Mammary epithelial cell (primary cell): ENCODE measurements at regions of chr6 and their contacts with region 1.

Region 1: DNA sequence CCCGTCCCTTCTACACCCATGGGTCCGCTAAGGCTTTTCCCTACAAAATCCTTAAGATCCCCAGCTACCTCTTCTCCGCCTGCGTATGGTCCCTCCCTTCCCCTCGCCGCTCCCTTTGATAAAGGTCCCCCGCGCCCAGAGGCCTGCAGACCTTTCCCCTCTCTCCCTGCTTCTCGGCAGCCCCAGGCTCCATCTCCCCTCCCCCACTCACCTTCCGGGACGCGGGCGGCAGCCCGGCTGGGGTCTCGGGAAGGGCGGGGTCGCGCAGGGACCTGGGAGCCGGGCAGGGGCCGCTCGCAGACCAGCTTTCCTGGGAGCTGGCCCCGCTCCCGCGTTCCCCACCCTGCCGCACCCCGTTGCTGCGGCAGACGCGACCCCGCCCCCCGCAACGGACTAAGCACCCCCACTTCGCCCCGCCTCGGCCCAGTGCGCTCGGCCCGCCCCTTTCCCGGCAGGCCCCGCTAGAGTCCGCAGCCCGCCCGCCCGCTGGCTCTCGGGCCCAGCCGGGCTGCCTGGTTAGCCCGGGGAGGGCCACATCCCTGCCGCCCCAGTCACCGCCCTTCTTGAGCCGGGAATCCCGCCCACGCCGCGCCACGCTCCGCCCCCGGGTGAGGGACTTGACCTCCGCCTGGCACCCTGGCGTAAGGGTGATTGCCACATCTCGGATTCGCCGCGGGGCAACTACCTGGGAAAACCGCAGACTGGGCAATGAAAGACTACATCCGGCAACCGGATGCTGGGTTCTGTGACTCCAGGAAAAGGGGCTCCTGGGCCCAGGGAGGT is at the start of gene FLOT1:
- DNase-seq: peak; percentile 99
- H3K4me3 ChIP-seq: peak within 1 kb of the TSS; percentile 69 to 93 (median 76)
- H3K27ac ChIP-seq: peak within 1 kb of the TSS; percentile 91
- H3K4me1 ChIP-seq: peaks cover 21% of the 10 kb centered on the region
- H3K27me3 ChIP-seq: no peaks in the 10 kb centered on the region
- CTCF ChIP-seq: no peak
- total RNA-seq, gene FLOT1: 53.9 to 57.5 TPM

Region 2: DNA sequence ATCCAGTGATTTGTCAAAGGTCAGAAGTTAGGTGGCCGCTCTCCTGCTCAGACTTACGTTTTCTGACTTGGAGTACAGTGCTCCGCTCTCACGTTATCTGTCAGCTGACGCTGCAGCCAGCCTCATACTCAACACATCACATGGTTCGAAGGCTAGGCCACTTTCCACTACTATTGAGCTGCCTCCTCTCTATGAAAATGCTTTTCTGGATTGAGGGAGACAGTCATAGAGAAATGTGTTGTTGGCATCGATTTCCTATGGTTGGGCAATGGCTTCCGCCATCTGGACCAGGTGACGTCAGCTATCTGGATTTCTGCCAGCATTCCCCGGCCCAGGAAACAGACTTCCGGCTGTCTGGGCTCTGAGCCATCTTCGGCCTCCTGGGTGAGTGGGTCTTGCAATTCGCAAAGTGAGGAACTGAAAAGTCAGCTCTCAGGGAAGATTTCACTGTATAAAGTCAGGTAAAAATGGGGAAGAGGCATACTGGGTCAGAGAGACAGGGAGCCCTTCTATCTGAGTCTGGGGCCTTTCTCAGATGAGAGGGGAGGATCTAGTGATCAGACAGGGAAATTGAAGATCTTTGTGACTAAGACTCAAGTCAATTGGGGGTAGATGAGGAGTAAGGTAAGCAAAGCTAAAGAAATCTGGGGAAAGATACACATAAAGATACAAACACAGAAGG is 39.4 kb after region 1 on chr6:
- CTCF ChIA-PET with region 1: interaction called, 6 read pairs
- dilution Hi-C with region 1: loop called (anchors 5 kb)
- in situ Hi-C with region 1: no loop called
- intact Hi-C with region 1: loop called (anchors 1 kb)
- DNase-seq: peak; percentile 97
- H3K4me3 ChIP-seq: no peak overlapping the region
- H3K27ac ChIP-seq: peak overlapping the region; percentile 97
- H3K4me1 ChIP-seq: peaks cover 36% of the 10 kb centered on the region
- H3K27me3 ChIP-seq: no peaks in the 10 kb centered on the region
- CTCF ChIP-seq: no peak

Region 3: DNA sequence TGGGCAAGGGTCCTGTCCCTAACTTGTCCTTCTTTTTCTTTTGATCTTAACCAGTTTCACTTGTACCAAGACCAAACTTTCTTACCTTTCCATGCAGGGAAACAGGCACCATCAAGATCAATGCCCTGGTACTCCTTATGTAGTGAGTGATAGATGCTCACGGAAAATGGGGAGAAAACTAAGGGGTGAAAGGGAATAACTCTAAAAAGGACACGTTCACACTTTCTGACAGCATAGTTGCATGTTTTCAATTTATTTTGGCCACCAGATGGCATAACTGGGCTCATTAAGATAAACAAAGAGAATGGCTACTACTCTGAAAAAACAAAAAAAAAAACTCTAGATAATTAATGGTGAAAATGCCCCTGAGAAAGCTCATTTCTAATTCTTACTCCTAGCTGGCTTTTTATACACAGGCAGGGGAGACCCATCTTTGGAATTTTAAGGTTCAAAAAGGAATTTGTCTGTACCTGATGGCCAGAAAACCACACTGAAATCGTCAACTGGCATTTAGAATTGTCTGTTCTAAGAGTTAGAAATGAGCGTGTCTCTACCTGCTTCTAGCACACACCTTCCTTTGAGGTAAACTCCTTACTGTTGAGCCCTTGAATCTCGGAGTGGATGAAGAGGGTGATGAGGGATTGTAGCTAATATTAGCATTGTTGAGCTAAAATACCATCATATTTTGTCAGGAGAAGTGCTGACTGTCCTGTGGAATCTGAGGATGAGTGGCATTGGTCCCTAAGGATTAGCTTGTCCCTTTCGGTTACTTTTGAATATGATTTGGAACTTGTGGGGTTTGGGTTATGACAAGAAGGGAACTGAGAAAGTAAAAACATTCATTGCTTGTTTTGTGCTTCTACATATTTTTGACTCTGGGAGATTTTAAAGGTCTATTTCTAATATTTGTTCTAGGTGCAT is 79.6 kb after region 1 on chr6:
- CTCF ChIA-PET with region 1: interaction called, 4 read pairs
- dilution Hi-C with region 1: loop called (anchors 5 kb)
- in situ Hi-C with region 1: no loop called
- intact Hi-C with region 1: loop called (anchors 1 kb)
- DNase-seq: peak; percentile 64
- H3K4me3 ChIP-seq: peak overlapping the region in 1 of 3 experiments; percentile 10
- H3K27ac ChIP-seq: peak overlapping the region; percentile 84
- H3K4me1 ChIP-seq: peaks cover 49% of the 10 kb centered on the region
- H3K27me3 ChIP-seq: no peaks in the 10 kb centered on the region
- CTCF ChIP-seq: peak; percentile 44 to 59

Region 4: GRCh38 chr6:30883685-30884520 is 141.4 kb after region 1 on chr6 and contains the start of gene DDR1:
- CTCF ChIA-PET with region 1: no interaction called
- dilution Hi-C with region 1: no loop called
- in situ Hi-C with region 1: loop called in 1 of 2 experiments (anchors 5 kb)
- intact Hi-C with region 1: loop called (anchors 1 kb)
- DNase-seq: peak; percentile 89
- H3K4me3 ChIP-seq: peak within 1 kb of the TSS; percentile 60 to 76 (median 73)
- H3K27ac ChIP-seq: peak within 1 kb of the TSS; percentile 95
- H3K4me1 ChIP-seq: peaks cover 58% of the 10 kb centered on the region
- H3K27me3 ChIP-seq: no peaks in the 10 kb centered on the region
- CTCF ChIP-seq: no peak
- total RNA-seq, gene DDR1: 192 to 315 TPM

Region 5: GRCh38 chr6:31087494-31088089 is 345.1 kb after region 1 on chr6:
- CTCF ChIA-PET with region 1: no interaction called
- dilution Hi-C with region 1: no loop called
- in situ Hi-C with region 1: no loop called
- intact Hi-C with region 1: loop called (anchors 5 kb)
- DNase-seq: peak; percentile 73
- H3K4me3 ChIP-seq: no peak overlapping the region
- H3K27ac ChIP-seq: no peak overlapping the region
- H3K4me1 ChIP-seq: peaks cover 8% of the 10 kb centered on the region
- H3K27me3 ChIP-seq: no peaks in the 10 kb centered on the region
- CTCF ChIP-seq: peak; percentile 74